ENCODE measurements at regions of chr12 and their contacts with region 1.

Region 1: GRCh38 chr12:87995581-87996178 is 33.5 kb downstream of the C12orf50 start:
- DNase-seq: peak; percentile 73
- ATAC-seq: peak; percentile 99
- H3K4me3 ChIP-seq: no peak overlapping the region
- H3K27ac ChIP-seq: no peak overlapping the region
- H3K4me1 ChIP-seq: no peaks in the 10 kb centered on the region
- H3K27me3 ChIP-seq: no peaks in the 10 kb centered on the region; the same call in 1 of the 2 replicates
- CTCF ChIP-seq: peak; percentile 87
- POLR2A ChIP-seq: no peak
- RAD21 ChIP-seq: peak; percentile 92

Region 2: DNA sequence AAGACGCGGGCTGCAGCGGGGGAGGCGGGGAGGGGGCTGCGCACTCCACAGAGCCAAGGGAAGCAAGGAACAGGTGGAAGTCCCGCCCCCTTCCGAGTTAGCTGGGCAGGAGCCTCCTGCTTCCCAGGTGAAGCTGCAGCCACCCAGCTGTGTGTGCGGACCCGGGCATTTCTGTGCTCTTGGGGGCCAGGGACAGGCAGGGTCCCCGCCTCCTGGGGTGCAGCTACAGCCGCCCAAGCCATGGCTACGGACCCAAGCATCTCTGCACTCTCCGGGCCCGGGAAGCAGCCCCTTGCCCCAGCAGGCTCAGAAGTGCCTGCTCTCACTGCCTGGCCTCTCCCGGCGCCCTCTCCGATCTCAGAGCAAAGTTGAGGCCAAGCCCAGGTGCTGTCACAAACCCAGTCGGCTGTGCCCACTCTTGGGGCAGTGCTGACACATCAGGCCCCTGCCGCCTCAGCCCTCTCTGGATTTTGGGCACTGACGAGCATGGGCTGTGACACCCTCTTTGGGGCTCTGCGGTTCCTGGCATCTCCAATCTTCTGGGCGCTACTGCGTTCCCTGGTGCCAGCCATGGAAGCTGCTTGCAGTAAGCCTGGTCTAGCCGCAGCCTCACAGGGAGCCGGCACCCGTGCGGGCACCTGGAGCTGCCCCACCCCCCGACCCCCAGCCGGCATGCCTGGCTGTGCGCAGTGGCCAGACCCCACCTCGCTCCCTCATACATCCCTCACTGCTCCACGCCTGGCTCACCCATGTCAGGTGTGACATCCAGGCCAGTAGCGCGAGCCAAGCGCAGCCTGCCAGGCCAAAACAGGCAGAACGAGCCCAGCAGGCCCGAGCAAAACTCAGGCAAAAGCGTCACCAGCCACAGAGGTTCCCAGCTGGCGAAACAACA is 1731.0 kb before region 1 on chr12:
- CTCF ChIA-PET with region 1: no interaction called
- POLR2A ChIA-PET with region 1: no interaction called
- dilution Hi-C with region 1: no loop called
- in situ Hi-C with region 1: no loop called
- intact Hi-C with region 1: loop called (anchors 10 kb)
- DNase-seq: no peak
- ATAC-seq: no peak
- H3K4me3 ChIP-seq: no peak overlapping the region
- H3K27ac ChIP-seq: no peak overlapping the region
- H3K4me1 ChIP-seq: no peaks in the 10 kb centered on the region
- H3K27me3 ChIP-seq: no peaks in the 10 kb centered on the region; the same call in 1 of the 2 replicates
- CTCF ChIP-seq: no peak
- POLR2A ChIP-seq: no peak
- RAD21 ChIP-seq: no peak

Region 3: DNA sequence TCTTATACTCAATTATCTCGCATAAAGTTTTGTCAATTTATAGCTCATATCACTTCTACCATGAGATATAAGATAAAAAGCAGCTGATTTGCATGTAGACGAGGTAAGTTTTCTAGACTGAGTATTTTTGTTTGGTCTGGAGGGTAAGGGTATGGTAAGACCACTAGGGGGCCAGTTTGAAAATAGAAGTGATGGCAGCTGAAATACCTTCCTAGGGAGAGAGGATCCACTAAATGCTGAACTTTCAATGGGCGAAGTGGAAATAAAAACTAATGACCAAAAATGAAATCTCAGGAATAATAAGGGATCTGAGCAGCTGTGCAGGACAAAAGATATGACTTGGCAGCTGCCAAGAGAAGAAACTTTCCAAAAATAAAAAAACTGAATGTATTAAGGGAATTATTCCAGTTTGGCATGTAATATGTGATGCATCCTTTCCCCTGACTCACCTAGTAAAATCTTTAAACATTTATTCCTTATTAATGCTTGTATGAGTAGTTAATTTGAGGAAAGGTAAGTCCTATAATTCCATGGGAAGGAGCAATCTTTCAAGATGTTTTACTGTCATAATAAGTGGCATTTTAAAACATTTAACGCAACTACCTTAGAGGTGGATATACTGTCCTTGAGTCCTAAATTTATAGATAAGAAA is 721.0 kb before region 1 on chr12:
- CTCF ChIA-PET with region 1: no interaction called
- POLR2A ChIA-PET with region 1: no interaction called
- dilution Hi-C with region 1: no loop called
- in situ Hi-C with region 1: no loop called
- intact Hi-C with region 1: loop called (anchors 10 kb)
- DNase-seq: peak; percentile 38
- ATAC-seq: peak; percentile 55; the same call in 1 of the 2 replicates
- H3K4me3 ChIP-seq: no peak overlapping the region
- H3K27ac ChIP-seq: no peak overlapping the region
- H3K4me1 ChIP-seq: peaks cover 2% of the 10 kb centered on the region; the same call in 1 of the 2 replicates
- H3K27me3 ChIP-seq: no peaks in the 10 kb centered on the region
- CTCF ChIP-seq: peak; percentile 45
- POLR2A ChIP-seq: no peak
- RAD21 ChIP-seq: peak; percentile 44